Mammary epithelial cell (primary cell): ENCODE measurements at regions of chr14 and their contacts with region 1.

Region 1: DNA sequence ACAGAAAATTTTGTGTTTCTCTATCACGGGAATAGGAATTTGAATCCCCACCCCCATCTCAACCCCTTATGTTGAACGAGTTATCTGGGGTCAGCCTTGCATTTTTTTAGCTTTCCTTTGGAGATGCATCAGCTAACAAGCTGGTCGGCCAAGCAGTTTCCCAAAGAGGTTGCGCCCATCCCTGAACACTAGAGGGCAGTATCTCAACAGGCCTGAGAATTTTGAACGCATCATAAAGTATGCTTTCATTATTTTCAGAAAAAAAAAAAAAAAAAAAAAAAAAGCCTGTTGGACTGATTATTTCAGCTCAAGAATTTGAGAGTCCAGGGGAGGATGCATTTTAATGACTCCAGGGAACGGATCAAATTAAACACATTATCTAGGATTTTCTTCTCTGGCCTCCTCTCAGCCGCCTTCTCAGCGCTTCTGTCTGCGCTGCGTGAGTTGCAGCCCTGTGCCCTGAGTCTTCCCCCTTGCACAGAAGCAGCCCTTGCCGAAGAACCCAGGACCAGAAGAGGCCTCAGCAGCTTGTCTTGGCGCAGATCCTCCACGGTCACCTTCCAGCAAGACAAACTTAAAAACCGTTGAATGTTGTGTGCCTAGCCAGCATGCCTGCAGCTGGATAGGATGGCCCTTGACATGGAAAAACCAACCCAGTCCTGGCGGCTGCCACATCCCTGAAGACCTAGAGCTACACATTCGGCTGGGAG is 76.6 kb upstream of the GZMB start:
- DNase-seq: peak; percentile 17
- H3K4me3 ChIP-seq: no peak overlapping the region
- H3K27ac ChIP-seq: no peak overlapping the region
- H3K4me1 ChIP-seq: no peaks in the 10 kb centered on the region
- H3K27me3 ChIP-seq: no peaks in the 10 kb centered on the region
- CTCF ChIP-seq: peak; percentile 84 to 94

Region 2: GRCh38 chr14:24534286-24534685 is 176.3 kb before region 1 on chr14:
- CTCF ChIA-PET with region 1: interaction called, 10 read pairs
- dilution Hi-C with region 1: no loop called
- in situ Hi-C with region 1: no loop called
- intact Hi-C with region 1: no loop called
- DNase-seq: no peak
- H3K4me3 ChIP-seq: no peak overlapping the region
- H3K27ac ChIP-seq: no peak overlapping the region
- H3K4me1 ChIP-seq: no peaks in the 10 kb centered on the region
- H3K27me3 ChIP-seq: no peaks in the 10 kb centered on the region
- CTCF ChIP-seq: no peak

Region 3: GRCh38 chr14:24766434-24766833 is 55.9 kb after region 1 on chr14:
- CTCF ChIA-PET with region 1: interaction called, 11 read pairs
- dilution Hi-C with region 1: no loop called
- in situ Hi-C with region 1: no loop called
- intact Hi-C with region 1: no loop called
- DNase-seq: no peak
- H3K4me3 ChIP-seq: no peak overlapping the region
- H3K27ac ChIP-seq: no peak overlapping the region
- H3K4me1 ChIP-seq: no peaks in the 10 kb centered on the region
- H3K27me3 ChIP-seq: no peaks in the 10 kb centered on the region
- CTCF ChIP-seq: no peak

Region 4: GRCh38 chr14:24863968-24864684 is 153.6 kb after region 1 on chr14:
- CTCF ChIA-PET with region 1: interaction called, 13 read pairs
- dilution Hi-C with region 1: no loop called
- in situ Hi-C with region 1: no loop called
- intact Hi-C with region 1: no loop called
- DNase-seq: no peak
- H3K4me3 ChIP-seq: no peak overlapping the region
- H3K27ac ChIP-seq: no peak overlapping the region
- H3K4me1 ChIP-seq: no peaks in the 10 kb centered on the region
- H3K27me3 ChIP-seq: no peaks in the 10 kb centered on the region
- CTCF ChIP-seq: no peak

Region 5: DNA sequence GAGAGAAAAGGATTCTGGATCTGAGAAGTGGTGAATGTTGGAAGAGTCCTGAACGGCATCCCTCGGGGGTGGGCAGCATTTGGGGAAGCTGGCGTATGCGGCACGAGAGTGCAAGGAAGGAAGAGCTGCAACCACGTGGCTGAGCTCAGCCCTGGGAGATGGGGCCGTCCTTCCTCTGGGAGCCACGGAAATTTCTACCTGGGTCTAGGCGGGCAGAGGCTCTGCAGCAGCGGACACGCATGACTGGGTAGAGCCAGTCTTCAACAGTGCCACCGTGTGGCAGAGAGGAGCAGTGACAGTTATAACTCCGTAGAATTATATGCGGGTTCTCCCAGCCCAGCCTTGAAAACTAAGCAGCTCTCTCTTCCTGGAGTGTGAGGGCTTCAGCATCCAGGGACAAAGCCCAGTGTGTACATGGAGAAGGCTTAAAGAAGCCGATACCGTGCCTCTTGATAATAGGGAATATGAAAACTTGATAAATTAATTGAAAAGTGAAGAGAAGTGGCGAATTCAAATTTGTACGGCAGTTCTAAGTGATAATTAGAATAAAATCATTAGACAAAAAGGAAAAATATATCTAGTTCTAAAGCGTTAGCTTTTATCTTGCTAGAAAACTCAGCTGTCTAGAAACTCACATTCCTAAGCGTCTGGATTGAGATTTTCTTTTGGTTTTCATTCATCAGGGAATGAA is 422.3 kb after region 1 on chr14:
- CTCF ChIA-PET with region 1: no interaction called
- dilution Hi-C with region 1: no loop called
- in situ Hi-C with region 1: no loop called
- intact Hi-C with region 1: loop called (anchors 5 kb)
- DNase-seq: peak; percentile 53
- H3K4me3 ChIP-seq: no peak overlapping the region
- H3K27ac ChIP-seq: no peak overlapping the region
- H3K4me1 ChIP-seq: no peaks in the 10 kb centered on the region
- H3K27me3 ChIP-seq: no peaks in the 10 kb centered on the region
- CTCF ChIP-seq: peak; percentile 51 to 76

Region 6: GRCh38 chr14:25400607-25401206 is 690.1 kb after region 1 on chr14:
- CTCF ChIA-PET with region 1: no interaction called
- dilution Hi-C with region 1: no loop called
- in situ Hi-C with region 1: no loop called
- intact Hi-C with region 1: loop called (anchors 10 kb)
- DNase-seq: peak; percentile 18
- H3K4me3 ChIP-seq: no peak overlapping the region
- H3K27ac ChIP-seq: no peak overlapping the region
- H3K4me1 ChIP-seq: no peaks in the 10 kb centered on the region
- H3K27me3 ChIP-seq: no peaks in the 10 kb centered on the region
- CTCF ChIP-seq: peak; percentile 59 to 60